ENCODE measurements at regions of chr10 and their contacts with region 1.

Region 1: GRCh38 chr10:43905512-43906236 is 257.0 kb upstream of the ZNF32 start:
- DNase-seq: peak; percentile 11
- H3K4me3 ChIP-seq: no peak overlapping the region
- H3K27ac ChIP-seq: no peak overlapping the region
- H3K4me1 ChIP-seq: peaks cover 6% of the 10 kb centered on the region
- H3K27me3 ChIP-seq: peaks cover 0 to 8% of the 10 kb centered on the region in 2 experiments
- CTCF ChIP-seq: no peak
- POLR2A ChIP-seq: no peak

Region 2: DNA sequence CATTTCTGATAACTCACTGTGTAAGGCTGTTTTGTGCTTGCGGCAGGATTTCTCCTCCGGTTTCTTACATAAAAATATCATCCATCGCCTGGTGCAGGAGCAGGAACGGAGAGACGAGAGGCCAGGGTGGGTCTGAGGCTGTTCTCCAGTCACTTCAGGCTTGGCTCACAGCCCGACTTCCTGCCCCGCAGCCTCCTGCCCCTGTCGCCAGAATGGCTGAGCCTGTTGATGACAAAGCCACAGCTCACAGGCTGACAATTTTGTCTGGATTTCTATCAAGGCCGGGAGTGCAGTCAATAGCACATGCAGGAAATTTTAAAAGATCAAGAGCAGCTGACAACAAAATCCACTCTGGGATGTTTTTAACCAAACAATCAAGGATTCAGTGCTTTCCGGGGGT is 27.3 kb before region 1 on chr10:
- CTCF ChIA-PET with region 1: no interaction called
- POLR2A ChIA-PET with region 1: no interaction called
- dilution Hi-C with region 1: no loop called
- intact Hi-C with region 1: no loop called
- DNase-seq: no peak
- H3K4me3 ChIP-seq: no peak overlapping the region
- H3K27ac ChIP-seq: no peak overlapping the region
- H3K4me1 ChIP-seq: peaks cover 5% of the 10 kb centered on the region
- H3K27me3 ChIP-seq: no peaks in the 10 kb centered on the region
- CTCF ChIP-seq: no peak
- POLR2A ChIP-seq: no peak

Region 3: DNA sequence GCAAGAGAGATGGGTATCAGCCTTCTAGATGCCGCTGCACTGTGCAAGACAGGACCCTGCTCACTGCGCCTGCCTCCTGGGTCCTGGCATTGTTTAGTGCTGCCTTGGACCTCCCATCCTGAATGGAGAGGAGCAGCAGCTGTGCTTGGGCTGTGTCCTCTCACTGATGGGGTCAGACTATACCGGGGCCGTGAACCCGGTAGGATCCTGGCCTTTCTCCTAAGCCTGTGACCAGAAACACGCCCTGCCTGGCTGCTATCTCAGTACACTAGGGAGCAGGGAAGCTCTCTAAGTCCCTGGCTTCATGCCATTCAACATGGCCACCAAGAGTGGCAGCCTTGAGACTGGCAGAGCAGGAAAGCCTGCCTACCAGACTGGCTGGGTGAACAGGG is 52.4 kb after region 1 on chr10:
- CTCF ChIA-PET with region 1: no interaction called
- POLR2A ChIA-PET with region 1: no interaction called
- dilution Hi-C with region 1: no loop called
- intact Hi-C with region 1: no loop called
- DNase-seq: no peak
- H3K4me3 ChIP-seq: no peak overlapping the region
- H3K27ac ChIP-seq: no peak overlapping the region
- H3K4me1 ChIP-seq: no peaks in the 10 kb centered on the region
- H3K27me3 ChIP-seq: no peaks in the 10 kb centered on the region
- CTCF ChIP-seq: no peak
- POLR2A ChIP-seq: no peak

Region 4: DNA sequence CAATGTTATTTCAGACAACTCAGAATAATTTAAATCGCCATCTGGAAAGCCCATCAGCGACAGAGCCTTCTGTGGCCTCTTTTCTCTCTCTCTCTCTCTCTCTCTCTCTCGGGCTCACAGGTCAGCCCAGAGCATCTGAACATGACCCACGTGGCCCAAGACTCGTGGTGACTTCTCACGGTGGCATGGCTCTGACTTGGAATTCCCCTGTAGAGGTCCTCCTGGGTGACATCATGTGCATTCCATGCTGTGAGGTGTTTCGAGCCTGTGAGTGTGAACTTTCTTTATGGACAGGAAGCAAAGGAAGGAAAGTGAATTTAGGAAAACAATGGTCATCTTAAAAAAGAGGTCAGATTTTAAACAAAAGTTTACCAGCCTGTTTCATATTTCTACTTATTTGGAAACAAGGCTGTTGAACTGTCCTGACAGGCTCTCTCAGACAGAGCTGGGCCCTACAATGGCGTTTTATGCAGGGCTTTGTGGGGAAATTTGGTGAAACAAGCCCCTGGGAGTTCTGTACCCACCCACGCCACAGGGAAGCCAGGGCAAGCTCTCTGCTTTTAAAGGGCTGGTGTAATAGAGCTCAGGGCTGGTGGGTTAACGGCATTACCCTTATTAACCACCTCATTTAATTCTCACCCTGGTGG is 102.7 kb after region 1 on chr10:
- CTCF ChIA-PET with region 1: no interaction called
- POLR2A ChIA-PET with region 1: no interaction called
- dilution Hi-C with region 1: no loop called
- intact Hi-C with region 1: loop called (anchors 1 kb)
- DNase-seq: peak; percentile 76
- H3K4me3 ChIP-seq: no peak overlapping the region
- H3K27ac ChIP-seq: peak overlapping the region; percentile 90
- H3K4me1 ChIP-seq: peaks cover 18% of the 10 kb centered on the region
- H3K27me3 ChIP-seq: no peaks in the 10 kb centered on the region
- CTCF ChIP-seq: no peak
- POLR2A ChIP-seq: no peak

Measured in endothelial cell of umbilical vein (primary cell).